ENCODE measurements at regions of chr2 and their contacts with region 1.

Region 1: DNA sequence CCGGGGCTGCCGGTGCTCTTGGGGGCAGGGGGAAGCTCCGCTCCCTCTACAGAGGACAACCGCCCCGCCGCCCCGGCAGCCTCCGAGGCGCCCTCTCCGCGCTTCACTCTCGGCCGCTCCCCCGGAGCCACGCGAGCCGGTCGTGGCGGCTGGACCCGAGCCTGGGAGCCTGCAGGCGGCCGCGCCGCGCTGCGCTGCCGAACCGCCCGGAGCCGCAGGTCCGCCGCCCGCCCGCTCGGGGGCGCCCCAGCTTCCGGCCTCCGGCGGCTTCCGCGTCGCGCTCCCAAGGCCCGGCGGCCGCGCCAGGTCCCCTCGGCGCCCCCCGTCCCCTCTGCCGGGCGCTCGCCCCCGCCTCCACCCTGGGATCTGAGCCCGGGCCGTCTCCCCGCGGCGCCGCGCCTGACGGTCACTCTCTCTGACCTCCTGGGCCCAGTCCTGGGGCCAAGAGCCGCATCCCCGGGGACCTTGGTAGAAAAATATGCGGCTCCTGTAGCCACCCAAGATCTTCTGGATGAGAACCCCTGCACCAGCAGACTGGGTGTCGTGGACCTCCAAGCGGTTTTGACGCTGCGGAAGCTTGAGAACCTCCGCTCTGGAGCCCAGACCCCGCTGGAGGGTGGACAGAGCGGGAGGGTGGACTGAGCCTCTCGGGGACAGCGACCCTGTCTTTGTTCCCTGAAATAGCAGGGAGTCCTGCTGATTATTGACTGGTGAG is 44.3 kb downstream of the SERTAD2 start:
- DNase-seq: peak; percentile 67
- H3K4me3 Mint-ChIP-seq: peak overlapping the region; percentile 68
- H3K27ac Mint-ChIP-seq: peak overlapping the region; percentile 29
- H3K4me1 Mint-ChIP-seq: peaks cover 28% of the 10 kb centered on the region
- H3K27me3 Mint-ChIP-seq: peaks cover 11% of the 10 kb centered on the region

Region 2: GRCh38 chr2:64644177-64645004 is 35.0 kb after region 1 on chr2:
- intact Hi-C with region 1: loop called (anchors 1 kb)
- DNase-seq: peak; percentile 51
- H3K4me3 Mint-ChIP-seq: peak overlapping the region; percentile 86
- H3K27ac Mint-ChIP-seq: peak overlapping the region; percentile 90
- H3K4me1 Mint-ChIP-seq: peaks cover 82% of the 10 kb centered on the region
- H3K27me3 Mint-ChIP-seq: peaks cover 3% of the 10 kb centered on the region

Region 3: DNA sequence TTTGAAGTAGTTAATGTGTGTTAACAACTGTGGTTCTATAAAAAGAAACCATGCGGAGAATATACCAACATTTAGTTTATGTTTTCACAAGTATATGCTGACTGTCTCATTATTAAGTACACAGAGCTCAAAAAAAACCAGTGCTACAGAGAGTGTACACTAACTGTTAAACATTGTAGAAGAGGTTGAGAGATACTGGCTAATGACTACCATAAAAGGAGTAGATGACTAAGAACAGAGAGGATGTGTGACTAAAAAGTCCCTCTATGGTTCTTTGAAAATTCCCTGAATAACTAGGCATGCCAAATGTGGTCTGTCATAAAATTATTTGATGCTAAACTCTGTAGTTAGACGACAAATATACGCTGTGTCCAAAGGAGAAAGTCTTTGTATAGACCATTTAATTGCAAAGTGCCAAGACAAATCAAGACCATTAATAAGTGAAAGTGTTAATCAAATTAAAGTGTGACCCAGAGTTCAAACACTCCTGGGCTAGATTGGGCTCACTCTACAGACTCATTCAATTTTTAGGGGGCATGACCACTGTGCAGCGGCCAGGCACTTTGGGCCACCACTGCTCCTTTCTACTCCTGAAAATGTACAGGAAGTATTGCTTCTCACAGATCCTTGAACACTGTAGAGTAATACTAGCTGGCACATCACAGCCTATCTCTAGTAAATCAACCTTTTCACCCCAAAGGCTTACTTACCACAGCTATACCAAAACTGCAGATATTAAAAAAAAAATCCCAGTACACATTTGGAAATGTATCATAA is 89.5 kb after region 1 on chr2:
- intact Hi-C with region 1: loop called (anchors 1 kb)
- DNase-seq: no peak
- H3K4me3 Mint-ChIP-seq: peak overlapping the region; percentile 53
- H3K27ac Mint-ChIP-seq: peak overlapping the region; percentile 90
- H3K4me1 Mint-ChIP-seq: peaks cover 60% of the 10 kb centered on the region
- H3K27me3 Mint-ChIP-seq: no peaks in the 10 kb centered on the region

Region 4: GRCh38 chr2:64767670-64768468 is 158.5 kb after region 1 on chr2:
- intact Hi-C with region 1: loop called (anchors 1 kb)
- DNase-seq: peak; percentile 69
- H3K4me3 Mint-ChIP-seq: peak overlapping the region; percentile 91
- H3K27ac Mint-ChIP-seq: peak overlapping the region; percentile 95
- H3K4me1 Mint-ChIP-seq: peaks cover 47% of the 10 kb centered on the region
- H3K27me3 Mint-ChIP-seq: no peaks in the 10 kb centered on the region

Region 5: GRCh38 chr2:64865073-64865830 is 255.9 kb after region 1 on chr2:
- intact Hi-C with region 1: loop called (anchors 1 kb)
- DNase-seq: peak; percentile 61
- H3K4me3 Mint-ChIP-seq: peak overlapping the region; percentile 78
- H3K27ac Mint-ChIP-seq: peak overlapping the region; percentile 60
- H3K4me1 Mint-ChIP-seq: peaks cover 6% of the 10 kb centered on the region
- H3K27me3 Mint-ChIP-seq: peaks cover 13% of the 10 kb centered on the region

Region 6: DNA sequence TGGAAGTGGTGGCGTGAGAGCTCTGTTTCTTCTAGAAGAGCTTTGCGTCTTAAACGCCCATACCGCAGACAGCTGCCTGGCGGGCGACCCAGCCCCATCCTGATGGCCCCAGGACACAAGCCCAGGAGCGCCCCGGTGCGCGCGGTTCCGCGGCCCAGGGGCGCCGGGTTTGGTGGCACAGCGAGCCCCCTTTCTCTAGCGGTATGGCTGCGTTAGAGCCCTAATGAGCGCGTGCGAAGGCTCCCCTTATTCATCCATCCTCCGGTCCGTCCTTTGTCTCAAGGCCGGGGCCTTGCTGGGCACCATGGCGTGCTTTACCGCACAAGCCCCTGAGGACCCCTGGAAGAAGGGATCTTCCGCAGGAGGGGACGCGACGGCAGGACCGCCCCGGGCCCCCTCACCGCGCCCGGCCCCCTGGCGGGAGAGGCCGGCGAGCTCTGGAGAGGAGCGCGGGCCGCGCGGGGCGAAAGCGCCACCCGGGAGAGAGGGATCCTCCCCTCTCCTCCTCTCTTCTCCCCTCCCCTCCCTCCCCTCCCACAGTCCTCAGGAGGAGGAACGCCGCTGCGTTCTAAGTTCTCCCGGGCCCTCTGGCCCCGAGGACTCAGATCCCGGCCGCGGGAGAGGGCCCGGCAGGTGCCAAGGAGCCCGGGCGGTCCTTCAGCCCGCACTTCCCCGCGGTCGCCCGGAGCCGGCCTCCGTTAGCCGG is 379.2 kb after region 1 on chr2:
- intact Hi-C with region 1: loop called (anchors 1 kb)
- DNase-seq: peak; percentile 75
- H3K4me3 Mint-ChIP-seq: peak overlapping the region; percentile 88
- H3K27ac Mint-ChIP-seq: peak overlapping the region; percentile 92
- H3K4me1 Mint-ChIP-seq: peaks cover 79% of the 10 kb centered on the region
- H3K27me3 Mint-ChIP-seq: peaks cover 11% of the 10 kb centered on the region